PC-3 (cell line): ENCODE measurements at regions of chr1 and their contacts with region 1.

Region 1: DNA sequence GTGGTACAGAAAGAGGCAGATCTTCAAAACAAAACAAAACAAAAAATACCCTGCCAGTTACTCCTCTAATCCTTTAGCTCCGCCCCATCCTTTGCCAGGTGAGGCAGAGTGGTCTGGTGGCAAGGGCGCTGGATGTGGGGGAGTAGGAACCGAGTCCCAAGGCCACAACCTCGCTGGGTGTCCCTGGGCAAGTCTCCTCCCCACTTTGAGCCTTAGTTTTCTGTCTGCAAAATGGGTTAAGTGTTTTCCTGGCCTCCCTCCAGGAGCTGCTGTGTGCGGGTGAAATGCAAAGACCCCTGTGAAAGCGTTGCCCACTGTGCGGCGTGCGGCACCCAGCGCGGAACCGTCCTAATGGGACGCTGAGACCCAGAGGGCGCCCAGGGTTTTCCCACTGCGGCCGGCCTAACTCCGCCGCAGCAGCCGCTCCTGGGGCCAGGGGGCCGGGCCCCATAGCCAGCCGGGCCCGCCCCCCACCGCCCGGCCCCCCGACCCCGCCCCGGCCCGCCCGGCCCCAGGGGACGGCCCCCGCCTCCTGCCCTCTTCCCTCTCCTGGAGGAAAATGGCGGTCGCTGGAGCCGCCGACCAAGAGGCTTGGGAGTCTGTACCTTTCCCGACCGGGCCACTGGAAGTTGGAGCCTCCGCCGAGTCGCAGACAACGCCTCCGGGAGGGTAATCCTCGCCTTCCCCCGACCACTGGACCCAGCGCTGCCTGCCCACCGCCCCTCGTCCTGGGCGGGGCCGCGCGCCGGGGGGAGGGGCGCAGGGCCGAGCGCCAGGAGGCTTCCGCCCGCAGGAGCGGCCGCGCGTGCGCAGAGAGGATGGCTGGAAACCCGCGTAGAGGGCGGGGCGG is at the starts of genes ERMAP and SVBP:
- DNase-seq: peak; percentile 83
- ATAC-seq: peak; percentile 91
- H3K4me3 ChIP-seq: peak within 1 kb of the TSS; percentile 86
- H3K27ac ChIP-seq: peak within 1 kb of the TSS; percentile 97
- H3K4me1 ChIP-seq: peaks cover 14% of the 10 kb centered on the region
- H3K27me3 ChIP-seq: no peaks in the 10 kb centered on the region
- CTCF ChIP-seq: no peak
- total RNA-seq, gene ERMAP: 5.4 and 5.8 TPM in 2 replicates
- total RNA-seq, gene SVBP: 32.7 and 39.7 TPM in 2 replicates

Region 2: GRCh38 chr1:42700006-42700405 is 116.8 kb before region 1 on chr1:
- CTCF ChIA-PET with region 1: no interaction called
- POLR2A ChIA-PET with region 1: no interaction called
- intact Hi-C with region 1: no loop called
- DNase-seq: peak; percentile 56
- ATAC-seq: peak; percentile 63; the same call in 1 of the 2 replicates
- H3K4me3 ChIP-seq: no peak overlapping the region
- H3K27ac ChIP-seq: no peak overlapping the region
- H3K4me1 ChIP-seq: peaks cover 18% of the 10 kb centered on the region
- H3K27me3 ChIP-seq: no peaks in the 10 kb centered on the region
- CTCF ChIP-seq: no peak

Region 3: DNA sequence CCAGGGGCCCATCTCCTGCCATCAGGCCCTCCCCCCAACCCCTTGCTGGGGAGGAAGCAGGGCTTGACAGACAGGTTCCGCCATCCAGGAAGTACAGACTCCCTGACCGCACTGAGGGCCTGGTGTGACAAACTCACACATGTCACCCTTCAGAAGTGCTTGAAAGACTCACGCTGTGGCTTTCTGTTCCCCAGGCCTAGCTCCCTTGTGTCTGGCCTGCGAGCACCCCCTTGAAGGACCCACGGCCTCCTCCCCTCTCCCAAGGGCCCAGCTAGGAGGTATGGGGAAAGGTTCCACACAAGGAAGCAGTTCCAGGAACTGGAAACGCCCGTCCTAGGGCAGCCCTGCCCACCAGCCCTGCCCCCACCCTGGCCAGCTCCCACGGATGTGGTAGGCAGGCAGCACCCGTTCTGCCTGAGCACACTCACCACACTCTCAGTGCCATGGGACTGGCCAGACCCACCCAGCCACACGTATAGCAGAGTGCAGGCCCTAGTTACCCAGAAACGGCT is 115.2 kb after region 1 on chr1:
- CTCF ChIA-PET with region 1: no interaction called
- POLR2A ChIA-PET with region 1: interaction called, 43 read pairs
- intact Hi-C with region 1: no loop called
- DNase-seq: peak; percentile 69
- ATAC-seq: peak; percentile 48
- H3K4me3 ChIP-seq: no peak overlapping the region
- H3K27ac ChIP-seq: peak overlapping the region; percentile 74
- H3K4me1 ChIP-seq: peaks cover 55% of the 10 kb centered on the region
- H3K27me3 ChIP-seq: no peaks in the 10 kb centered on the region
- CTCF ChIP-seq: no peak